ENCODE measurements at regions of chr2 and their contacts with region 1.

Region 1: GRCh38 chr2:10691521-10691920 is 1.7 kb upstream of the NOL10 start:
- DNase-seq: no peak
- ATAC-seq: no peak

Region 2: DNA sequence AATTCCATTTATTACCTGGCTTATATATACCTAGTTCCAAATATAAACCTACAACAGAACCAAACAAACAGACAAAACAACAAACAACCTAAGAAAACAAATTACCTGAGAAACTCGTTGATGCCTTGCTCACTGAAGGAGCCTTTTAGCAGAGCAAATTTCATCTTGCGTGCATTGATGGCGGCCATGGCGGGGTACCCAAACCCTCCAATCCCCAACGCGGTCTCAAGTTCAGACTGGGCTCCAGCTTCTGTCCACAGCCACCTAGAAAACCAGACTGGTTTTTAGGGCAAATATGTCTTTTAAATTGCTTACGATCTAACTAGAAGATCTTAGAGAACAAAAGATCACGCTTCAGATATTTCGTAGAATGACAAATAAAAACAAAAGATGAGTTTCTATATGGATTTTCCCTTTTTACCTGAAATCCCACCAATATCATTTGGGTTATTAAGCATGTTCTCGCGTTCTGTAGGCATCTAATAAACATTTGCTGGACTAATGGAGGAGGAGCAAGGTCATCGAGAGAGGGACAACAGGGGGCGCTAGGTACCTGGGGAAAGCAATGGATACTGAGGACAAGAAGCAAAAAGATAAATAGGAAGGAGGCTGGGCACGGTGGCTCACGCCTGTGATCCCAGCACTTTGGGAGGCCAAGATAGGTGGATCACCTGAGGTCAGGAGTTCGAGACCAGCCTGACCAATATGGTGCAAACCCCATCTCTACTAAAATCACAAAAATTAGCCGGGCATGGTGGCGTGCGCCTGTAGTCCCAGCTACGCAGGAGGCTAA is 95.9 kb after region 1 on chr2:
- intact Hi-C with region 1: no loop called
- DNase-seq: no peak
- ATAC-seq: no peak

Region 3: DNA sequence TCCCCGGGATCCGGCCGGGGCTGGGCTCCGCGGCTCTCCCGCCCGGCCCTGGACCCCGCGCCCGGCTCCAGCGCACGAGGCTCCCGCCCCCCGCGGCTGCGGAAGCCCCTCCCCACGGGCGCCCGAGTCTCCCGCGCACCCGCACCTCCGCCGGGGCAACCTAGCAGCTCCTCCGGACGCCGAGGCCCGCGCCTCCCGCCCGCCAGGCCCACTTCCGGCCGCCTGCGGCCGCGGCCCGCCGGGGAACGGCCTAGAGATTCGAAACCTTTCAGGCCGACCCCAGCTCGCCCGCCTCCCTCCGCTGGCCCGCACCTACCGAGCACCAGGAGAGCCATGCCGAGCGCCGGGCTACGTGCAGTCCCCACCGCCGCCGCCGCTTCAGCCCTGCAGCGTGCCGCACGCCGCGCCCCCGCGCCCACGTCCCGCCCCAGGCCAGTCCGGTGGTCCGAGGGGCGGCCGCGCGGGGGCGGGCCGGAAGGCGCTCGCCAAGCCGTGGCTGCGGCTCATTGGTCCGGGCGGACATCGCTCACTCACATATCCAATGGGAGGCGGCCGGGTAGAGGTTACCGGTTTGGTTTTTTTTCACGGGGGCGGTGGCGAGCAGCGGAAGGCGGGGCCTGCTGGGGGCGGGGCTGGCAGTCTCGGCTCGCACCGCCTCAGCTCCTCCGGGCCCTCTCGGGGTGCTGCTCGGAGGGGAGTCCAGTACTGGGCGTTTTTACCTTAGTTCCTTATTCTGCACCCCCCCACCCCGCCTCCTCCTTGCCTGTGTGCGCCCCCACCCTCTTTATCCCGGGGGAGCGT is 121.0 kb after region 1 on chr2 and contains the start of gene PDIA6:
- intact Hi-C with region 1: loop called (anchors 5 kb)
- DNase-seq: peak; percentile 97
- ATAC-seq: peak; percentile 99
- total RNA-seq, gene PDIA6: 125 TPM